ENCODE measurements at regions of chr14 and their contacts with region 1.

Region 1: GRCh38 chr14:65958664-65959562 is 527.3 kb upstream of the CCDC196 start:
- DNase-seq: peak in 1 of 3 donors; percentile 52
- ATAC-seq: peak in 1 of 2 donors; percentile 47
- H3K4me3 ChIP-seq: no peak overlapping the region
- H3K27ac ChIP-seq: no peak overlapping the region
- H3K4me1 ChIP-seq: no peaks in the 10 kb centered on the region
- H3K27me3 ChIP-seq: no peaks in the 10 kb centered on the region

Region 2: DNA sequence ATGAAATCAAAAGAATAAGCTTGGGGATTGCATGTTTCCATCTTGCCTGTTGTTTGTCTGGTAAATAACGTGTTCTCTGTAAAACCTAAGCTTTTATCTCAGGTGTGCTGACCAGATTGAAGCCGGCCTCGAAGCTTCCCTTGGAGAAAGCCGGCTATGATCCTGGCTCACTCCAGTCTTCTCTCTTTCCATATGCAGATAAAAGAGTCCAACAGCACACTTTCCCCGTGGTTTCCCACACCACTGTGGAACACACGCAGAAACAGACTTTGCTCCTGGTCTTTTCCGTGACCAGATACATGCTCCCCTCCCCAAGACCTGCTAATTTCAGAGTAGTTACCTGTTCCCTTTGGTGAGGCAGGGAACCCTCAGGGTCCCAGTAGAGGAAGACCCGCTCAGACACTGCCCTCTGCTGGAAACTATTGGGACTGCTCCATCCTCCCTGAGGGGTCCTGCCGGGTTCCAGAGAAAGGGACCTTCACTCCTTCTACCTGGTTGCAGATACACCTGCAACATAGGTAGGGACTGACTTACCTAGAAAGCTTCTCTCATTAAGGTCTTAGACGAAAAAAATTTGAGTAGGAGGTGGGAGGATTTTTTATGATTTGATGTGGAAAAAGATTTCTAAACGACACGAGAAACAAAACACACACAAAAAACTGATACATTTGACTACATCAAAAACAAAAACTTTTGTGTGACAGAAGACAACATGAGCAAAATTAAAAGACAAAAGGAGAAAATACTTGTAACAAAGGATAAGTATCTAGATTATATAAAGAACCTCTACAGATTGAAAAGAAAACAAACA is 111.8 kb after region 1 on chr14:
- intact Hi-C with region 1: loop called in 1 of 4 experiments (anchors 10 kb)
- DNase-seq: peak in 2 of 3 donors; percentile 65 to 76
- ATAC-seq: peak; percentile 43
- H3K4me3 ChIP-seq: no peak overlapping the region
- H3K27ac ChIP-seq: no peak overlapping the region
- H3K4me1 ChIP-seq: no peaks in the 10 kb centered on the region
- H3K27me3 ChIP-seq: no peaks in the 10 kb centered on the region